Motor neuron (in vitro differentiated cells): ENCODE measurements at regions of chr20 and their contacts with region 1.

Region 1: GRCh38 chr20:43749734-43750294 is 23.0 kb upstream of the GTSF1L start:
- ATAC-seq: peak; percentile 76 to 97 (median 92)
- H3K4me3 ChIP-seq: no peak overlapping the region
- H3K27ac ChIP-seq: no peak overlapping the region
- H3K4me1 ChIP-seq: peaks cover 0 to 5% of the 10 kb centered on the region in 2 donors

Region 2: DNA sequence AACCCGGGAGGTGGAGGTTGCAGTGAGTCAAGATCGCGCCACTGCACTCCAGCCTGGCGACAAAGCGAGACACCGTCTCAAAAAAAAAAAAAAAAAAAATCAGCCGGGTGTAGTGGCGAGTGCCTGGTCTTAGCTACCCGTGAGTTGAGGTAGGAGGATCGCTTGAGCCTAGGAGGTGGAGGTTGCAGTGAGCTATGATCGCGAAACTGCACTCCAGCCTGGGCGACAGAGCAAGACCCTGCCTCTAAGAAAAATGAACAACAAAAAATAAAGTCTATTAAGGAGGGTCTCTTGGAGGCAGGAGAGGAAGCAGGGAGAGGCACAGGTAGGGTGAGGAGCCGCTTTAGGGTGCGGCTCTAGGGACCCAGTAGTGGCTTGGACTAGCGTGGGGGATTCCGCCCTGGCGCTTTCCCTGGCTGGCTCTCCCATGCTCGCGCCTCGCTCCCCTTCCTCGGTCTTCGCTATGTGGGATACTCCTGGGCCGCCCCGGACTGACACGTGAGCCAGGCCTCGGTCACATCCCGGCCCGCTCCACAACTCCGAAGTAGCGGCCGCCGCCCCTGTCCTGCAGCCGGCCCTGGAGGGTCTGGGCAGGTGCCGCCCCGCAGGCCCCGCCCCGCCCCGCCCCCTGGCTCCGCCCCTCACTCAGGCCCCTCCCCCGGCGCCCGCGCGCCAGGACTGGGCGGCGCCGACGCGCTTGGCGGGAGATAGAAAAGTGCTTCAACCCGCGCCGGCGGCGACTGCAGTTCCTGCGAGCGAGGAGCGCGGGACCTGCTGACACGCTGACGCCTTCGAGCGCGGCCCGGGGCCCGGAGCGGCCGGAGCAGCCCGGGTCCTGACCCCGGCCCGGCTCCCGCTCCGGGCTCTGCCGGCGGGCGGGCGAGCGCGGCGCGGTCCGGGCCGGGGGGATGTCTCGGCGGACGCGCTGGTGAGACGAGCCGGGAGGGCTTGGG is 83.2 kb before region 1 on chr20 and contains the start of gene MYBL2:
- in situ Hi-C with region 1: no loop called
- ATAC-seq: peak; percentile 71 to 96 (median 94)
- H3K4me3 ChIP-seq: peak within 1 kb of the TSS; percentile 41 to 60 (median 58)
- H3K27ac ChIP-seq: no peak within 1 kb of the TSS
- H3K4me1 ChIP-seq: peaks cover 0 to 3% of the 10 kb centered on the region in 2 donors
- total RNA-seq, gene MYBL2: 1.1 to 47.3 (median 1.5) TPM in 7 of 8 experiments, not detected in the other

Region 3: GRCh38 chr20:43914311-43915210 is 164.7 kb after region 1 on chr20 and contains the start of gene TOX2:
- in situ Hi-C with region 1: loop called in 1 of 9 experiments (anchors 25 kb)
- ATAC-seq: peak; percentile 28 to 82 (median 75)
- H3K4me3 ChIP-seq: peak within 1 kb of the TSS; percentile 53 to 74 (median 65)
- H3K27ac ChIP-seq: no peak within 1 kb of the TSS
- H3K4me1 ChIP-seq: peaks cover 16 to 20% of the 10 kb centered on the region in 2 donors
- total RNA-seq, gene TOX2: 4.9 to 27.0 (median 8.6) TPM

Region 4: DNA sequence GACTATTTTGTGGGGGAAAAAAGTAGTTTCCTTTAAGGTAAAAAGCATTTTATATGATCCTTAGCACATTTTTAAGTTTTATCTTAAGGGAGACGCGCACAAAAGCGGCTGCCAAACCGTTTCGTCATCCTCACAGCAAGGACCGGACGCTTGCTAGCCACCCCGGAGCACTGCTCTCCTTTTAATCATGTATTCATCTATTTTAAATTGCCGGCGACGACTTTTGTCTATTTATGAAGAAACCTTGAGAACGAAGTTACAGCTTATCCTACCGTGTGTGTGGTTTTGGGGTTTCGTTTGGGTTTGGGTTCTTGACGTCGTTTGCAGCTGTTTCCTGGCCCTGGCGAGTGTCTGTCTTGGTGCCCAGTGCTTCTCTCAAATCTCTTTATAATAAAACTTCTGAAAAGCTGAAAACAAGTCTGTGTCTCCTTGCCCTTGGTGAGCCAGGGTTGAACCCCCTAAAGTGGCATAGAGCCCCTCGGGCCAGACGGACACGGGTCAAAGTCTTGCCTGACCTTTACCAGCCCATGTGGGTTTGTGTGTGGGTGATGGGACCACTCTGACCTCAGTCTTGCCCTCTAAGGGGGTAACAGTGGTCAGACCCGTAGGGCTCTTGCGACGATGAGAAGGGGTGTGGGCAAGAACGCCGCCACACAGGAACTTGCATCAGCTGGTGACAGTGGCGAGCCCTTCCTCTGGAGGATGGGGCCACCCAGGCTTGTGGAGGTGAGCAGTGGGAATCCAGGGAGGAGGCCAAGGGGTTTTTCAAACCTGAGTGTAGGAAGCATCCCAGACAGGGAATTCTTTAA is 319.6 kb after region 1 on chr20:
- in situ Hi-C with region 1: loop called in 2 of 9 experiments (anchors 10 kb)
- ATAC-seq: no peak
- H3K4me3 ChIP-seq: no peak overlapping the region
- H3K27ac ChIP-seq: no peak overlapping the region
- H3K4me1 ChIP-seq: peaks cover 8 to 18% of the 10 kb centered on the region in 2 donors

Region 5: GRCh38 chr20:44460795-44461141 is 711.0 kb after region 1 on chr20:
- in situ Hi-C with region 1: no loop called
- ATAC-seq: peak in 4 of 8 experiments; percentile 49 to 77 (median 71)
- H3K4me3 ChIP-seq: no peak overlapping the region
- H3K27ac ChIP-seq: no peak overlapping the region
- H3K4me1 ChIP-seq: no peaks in the 10 kb centered on the region